Activated B cell treated with CpG ODN at 0.5 μM for 24 hours (primary cell): ENCODE measurements at regions of chr5 and their contacts with region 1.

Region 1: GRCh38 chr5:159286420-159287035 is 23.4 kb downstream of the UBLCP1 start:
- DNase-seq: no peak
- ATAC-seq: peak; percentile 71
- H3K4me3 Mint-ChIP-seq: no peak overlapping the region
- H3K27ac Mint-ChIP-seq: no peak overlapping the region
- H3K4me1 Mint-ChIP-seq: no peaks in the 10 kb centered on the region
- H3K27me3 Mint-ChIP-seq: no peaks in the 10 kb centered on the region
- CTCF ChIP-seq: no peak

Region 2: GRCh38 chr5:159310511-159310910 is 24.0 kb after region 1 on chr5:
- CTCF ChIA-PET with region 1: interaction called, 68 read pairs
- POLR2A ChIA-PET with region 1: interaction called, 3 read pairs
- intact Hi-C with region 1: no loop called
- DNase-seq: peak; percentile 37
- ATAC-seq: peak; percentile 95
- H3K4me3 Mint-ChIP-seq: peak overlapping the region; percentile 80
- H3K27ac Mint-ChIP-seq: peak overlapping the region; percentile 56
- H3K4me1 Mint-ChIP-seq: peaks cover 16% of the 10 kb centered on the region
- H3K27me3 Mint-ChIP-seq: peaks cover 6% of the 10 kb centered on the region
- CTCF ChIP-seq: no peak

Region 3: GRCh38 chr5:159362220-159362619 is 75.7 kb after region 1 on chr5:
- CTCF ChIA-PET with region 1: no interaction called
- POLR2A ChIA-PET with region 1: no interaction called
- intact Hi-C with region 1: no loop called
- DNase-seq: no peak
- ATAC-seq: no peak
- H3K4me3 Mint-ChIP-seq: no peak overlapping the region
- H3K27ac Mint-ChIP-seq: no peak overlapping the region
- H3K4me1 Mint-ChIP-seq: peaks cover 15% of the 10 kb centered on the region
- H3K27me3 Mint-ChIP-seq: no peaks in the 10 kb centered on the region
- CTCF ChIP-seq: no peak

Region 4: DNA sequence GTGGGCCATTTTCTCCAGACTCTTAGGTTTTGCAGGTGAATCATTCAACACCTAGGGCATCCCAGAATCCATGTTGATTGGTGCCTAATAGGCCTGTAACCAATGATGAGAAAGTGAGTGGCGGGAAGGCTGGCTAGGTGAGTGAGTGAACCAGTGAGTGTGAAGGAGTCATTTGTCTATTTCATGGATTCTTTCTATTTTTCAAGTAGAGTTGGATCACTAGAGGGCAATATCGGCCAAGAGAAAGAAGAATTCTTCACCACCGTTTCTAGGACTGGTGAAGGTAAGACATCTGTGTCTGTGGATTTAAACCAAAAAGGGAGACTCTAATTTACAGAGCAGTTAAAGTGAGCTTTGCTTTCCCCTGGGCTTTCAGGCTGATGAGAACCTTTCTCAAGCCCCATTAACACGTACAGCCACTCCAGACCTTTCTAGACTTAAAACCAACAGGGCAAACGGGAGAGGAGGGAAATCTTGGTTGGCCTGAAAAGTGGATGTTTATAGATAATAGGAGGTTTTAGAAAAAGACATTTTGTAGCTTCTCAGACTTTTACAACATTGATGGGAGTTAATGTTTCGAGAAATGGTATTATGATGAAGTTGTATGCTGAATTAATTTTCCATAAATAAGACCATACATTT is 158.0 kb after region 1 on chr5:
- CTCF ChIA-PET with region 1: interaction called, 37 read pairs
- POLR2A ChIA-PET with region 1: no interaction called
- intact Hi-C with region 1: loop called (anchors 2 kb)
- DNase-seq: no peak
- ATAC-seq: peak; percentile 67
- H3K4me3 Mint-ChIP-seq: no peak overlapping the region
- H3K27ac Mint-ChIP-seq: no peak overlapping the region
- H3K4me1 Mint-ChIP-seq: peaks cover 6% of the 10 kb centered on the region
- H3K27me3 Mint-ChIP-seq: no peaks in the 10 kb centered on the region
- CTCF ChIP-seq: no peak

Region 5: DNA sequence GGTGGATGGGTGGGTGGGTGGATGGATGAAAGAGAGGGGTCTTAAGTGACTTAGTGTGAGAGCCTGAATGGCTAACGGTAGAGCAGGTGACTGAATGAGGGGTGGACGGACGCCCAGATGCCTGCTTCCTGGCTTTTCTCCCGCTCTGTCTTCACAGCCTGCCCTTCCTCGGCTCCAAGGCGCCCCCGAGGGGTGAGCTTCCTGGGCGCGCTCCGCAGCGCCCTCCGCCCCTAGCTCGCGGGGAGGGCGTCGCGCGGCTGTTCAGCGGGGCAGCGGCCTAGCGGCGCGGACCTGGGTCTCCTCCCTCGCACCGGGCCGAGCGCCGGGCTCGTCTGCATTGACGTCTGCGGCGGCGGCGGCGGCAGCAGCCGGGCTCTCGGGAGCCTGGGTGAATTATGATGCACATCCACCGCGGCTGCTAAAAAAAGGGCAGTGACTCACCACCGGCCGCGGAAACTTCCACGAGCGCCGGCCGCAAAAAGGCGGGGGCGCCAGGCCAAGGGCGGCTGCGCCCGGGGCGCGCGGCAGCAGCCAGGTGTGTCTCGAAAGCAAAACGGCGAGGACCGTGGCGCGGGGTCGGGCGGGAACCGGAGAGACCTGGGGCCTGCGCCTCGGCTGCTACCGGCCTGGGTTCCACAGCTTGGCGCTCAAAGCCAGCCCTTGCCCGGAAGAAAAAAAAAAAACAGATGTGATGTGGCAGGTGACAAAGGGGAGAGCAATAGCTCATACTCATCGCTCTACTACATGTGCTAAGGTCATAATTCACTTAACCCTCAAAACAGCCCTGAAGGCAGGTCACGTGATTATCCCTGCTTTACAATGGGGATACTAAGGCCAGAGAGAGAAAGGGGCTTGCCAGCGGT is 486.8 kb after region 1 on chr5:
- CTCF ChIA-PET with region 1: no interaction called
- POLR2A ChIA-PET with region 1: no interaction called
- intact Hi-C with region 1: loop called (anchors 5 kb)
- DNase-seq: peak; percentile 78
- ATAC-seq: peak; percentile 95
- H3K4me3 Mint-ChIP-seq: peak overlapping the region; percentile 74
- H3K27ac Mint-ChIP-seq: peak overlapping the region; percentile 56
- H3K4me1 Mint-ChIP-seq: peaks cover 12% of the 10 kb centered on the region
- H3K27me3 Mint-ChIP-seq: peaks cover 14% of the 10 kb centered on the region
- CTCF ChIP-seq: no peak

Region 6: DNA sequence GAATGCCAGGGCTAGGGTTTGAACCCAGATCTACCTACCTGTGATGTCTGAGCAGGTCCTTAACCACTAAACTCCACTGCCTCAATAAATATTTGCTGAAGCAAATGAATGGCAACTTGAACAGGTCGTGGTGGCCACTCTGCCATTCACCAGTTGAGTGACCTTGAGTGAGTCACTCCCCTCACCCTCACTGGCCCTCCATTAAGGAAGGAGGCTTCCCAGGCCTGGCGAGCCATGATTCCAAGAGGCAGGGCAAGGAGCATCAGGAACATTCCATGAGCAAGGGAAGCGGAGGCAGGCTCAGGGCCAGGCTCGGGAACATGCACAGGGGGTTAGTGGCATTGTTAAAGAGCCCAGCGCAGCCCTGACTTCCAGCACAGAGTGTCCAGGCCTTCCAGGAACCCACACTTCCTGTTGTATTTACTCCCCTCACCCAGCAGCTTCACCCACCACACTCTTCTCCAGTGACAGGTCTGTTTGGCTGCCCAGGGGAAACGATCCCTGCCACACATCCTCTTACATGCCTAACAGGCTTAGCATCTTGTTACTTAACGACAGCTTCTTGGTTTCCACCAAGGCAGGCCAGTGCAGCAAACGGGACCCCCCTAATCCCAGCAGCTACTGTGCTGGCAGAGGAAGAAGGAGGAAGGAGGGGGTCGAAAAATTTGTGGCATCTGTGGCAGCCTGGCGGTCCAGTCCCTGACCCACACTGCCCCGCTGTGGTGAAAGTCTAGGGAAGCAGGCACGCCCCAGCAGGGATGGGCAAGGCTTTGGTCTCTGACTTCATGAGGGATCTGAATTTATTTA is 678.7 kb after region 1 on chr5:
- CTCF ChIA-PET with region 1: interaction called, 10 read pairs
- POLR2A ChIA-PET with region 1: interaction called, 5 read pairs
- intact Hi-C with region 1: loop called (anchors 1 kb)
- DNase-seq: no peak
- ATAC-seq: no peak
- H3K4me3 Mint-ChIP-seq: no peak overlapping the region
- H3K27ac Mint-ChIP-seq: no peak overlapping the region
- H3K4me1 Mint-ChIP-seq: no peaks in the 10 kb centered on the region
- H3K27me3 Mint-ChIP-seq: peaks cover 42% of the 10 kb centered on the region
- CTCF ChIP-seq: no peak

Region 7: DNA sequence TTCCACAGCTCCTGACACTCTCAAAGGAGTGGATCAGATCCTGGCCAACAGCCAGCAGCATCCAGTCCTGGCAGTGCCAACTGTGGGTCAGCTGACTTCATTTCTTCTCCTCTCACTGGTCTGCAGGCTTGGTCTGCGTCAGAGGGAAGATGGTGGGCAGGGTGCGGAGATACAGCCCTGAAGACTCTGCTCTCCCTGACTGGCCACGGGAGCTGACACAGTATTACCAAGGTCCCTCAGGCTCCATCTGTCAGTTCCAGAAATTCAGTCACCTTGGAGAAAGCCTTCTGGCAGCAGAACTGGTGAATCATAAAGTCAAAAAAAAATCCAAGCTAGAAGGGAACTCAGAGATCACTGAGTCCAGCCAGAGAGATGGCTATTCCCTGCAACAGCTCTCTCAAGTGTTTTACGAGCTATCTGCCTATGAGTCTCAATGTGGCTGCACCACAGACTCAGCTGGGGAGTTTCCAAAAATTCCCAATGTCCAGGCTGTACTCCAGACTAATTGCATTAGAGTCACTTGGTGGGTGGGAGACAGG is 1055.9 kb after region 1 on chr5:
- CTCF ChIA-PET with region 1: no interaction called
- POLR2A ChIA-PET with region 1: no interaction called
- intact Hi-C with region 1: loop called (anchors 2 kb)
- DNase-seq: no peak
- ATAC-seq: no peak
- H3K4me3 Mint-ChIP-seq: no peak overlapping the region
- H3K27ac Mint-ChIP-seq: no peak overlapping the region
- H3K4me1 Mint-ChIP-seq: no peaks in the 10 kb centered on the region
- H3K27me3 Mint-ChIP-seq: no peaks in the 10 kb centered on the region
- CTCF ChIP-seq: no peak